Right ventricle myocardium inferior (tissue), 1 donor: ENCODE measurements at regions of chr9 and their contacts with region 1.

Region 1: GRCh38 chr9:83327323-83327722 is 210.9 kb downstream of the FRMD3 start:
- DNase-seq: no peak
- ATAC-seq: peak; percentile 42

Region 2: GRCh38 chr9:83166369-83166768 is 161.0 kb before region 1 on chr9:
- intact Hi-C with region 1: no loop called
- DNase-seq: no peak
- ATAC-seq: no peak

Region 3: GRCh38 chr9:83274827-83275226 is 52.5 kb before region 1 on chr9:
- intact Hi-C with region 1: loop called (anchors 5 kb)
- DNase-seq: no peak
- ATAC-seq: no peak